ENCODE measurements at regions of chr1 and their contacts with region 1.

Region 1: GRCh38 chr1:84913555-84913892 is 20.5 kb upstream of the LPAR3 start:
- DNase-seq: no peak
- ATAC-seq: peak in 3 of 4 donors; percentile 36 to 80 (median 75)
- H3K4me3 ChIP-seq: no peak overlapping the region
- H3K27ac ChIP-seq: no peak overlapping the region
- H3K4me1 ChIP-seq: peaks cover 0 to 9% (median 3%) of the 10 kb centered on the region in 12 donors
- H3K27me3 ChIP-seq: no peaks in the 10 kb centered on the region
- CTCF ChIP-seq: no peak
- POLR2A ChIP-seq: no peak

Region 2: DNA sequence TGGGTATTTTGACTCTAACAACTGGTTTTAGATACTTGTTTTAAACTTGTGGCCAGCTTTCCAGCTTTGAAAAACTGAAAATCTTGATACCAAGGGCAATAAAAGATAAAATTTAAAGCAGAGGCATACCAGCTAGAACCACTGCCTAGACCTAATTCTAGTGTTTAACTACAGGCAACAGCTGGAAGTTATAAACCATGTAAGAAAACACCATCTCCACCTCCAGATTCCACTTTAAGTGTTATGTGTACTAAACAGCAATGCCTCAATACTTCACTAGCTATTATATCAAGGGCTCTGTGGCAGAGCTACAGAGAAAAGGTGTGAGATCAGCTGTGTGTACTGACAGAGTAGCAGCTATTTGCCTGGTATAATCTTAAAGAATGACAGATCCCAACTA is 90.0 kb before region 1 on chr1:
- intact Hi-C with region 1: no loop called
- DNase-seq: no peak
- ATAC-seq: peak in 2 of 4 donors; percentile 33 to 39
- H3K4me3 ChIP-seq: no peak overlapping the region
- H3K27ac ChIP-seq: no peak overlapping the region
- H3K4me1 ChIP-seq: peaks cover 0 to 7% (median 0%) of the 10 kb centered on the region in 12 donors
- H3K27me3 ChIP-seq: no peaks in the 10 kb centered on the region
- CTCF ChIP-seq: no peak
- POLR2A ChIP-seq: no peak

Region 3: DNA sequence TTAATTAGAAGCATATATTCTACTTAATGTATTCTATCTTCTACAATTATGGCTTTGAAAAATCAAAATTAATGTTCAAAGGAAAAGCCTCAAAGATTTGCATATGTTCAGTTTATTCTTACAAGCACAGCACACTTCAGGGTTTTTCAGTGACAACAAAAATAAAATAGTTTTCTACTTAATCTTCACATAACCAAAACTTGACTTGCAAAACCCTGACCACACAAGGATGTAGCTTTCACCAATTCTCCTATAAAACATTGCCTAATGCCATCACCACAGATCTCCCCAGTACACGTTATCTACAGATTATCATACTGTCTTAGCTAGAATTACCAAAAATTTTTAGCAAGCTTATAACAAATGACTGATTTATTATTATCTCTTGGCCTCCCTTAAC is 43.8 kb before region 1 on chr1:
- intact Hi-C with region 1: loop called in 1 of 10 experiments (anchors 2 kb)
- DNase-seq: no peak
- ATAC-seq: no peak
- H3K4me3 ChIP-seq: no peak overlapping the region
- H3K27ac ChIP-seq: no peak overlapping the region
- H3K4me1 ChIP-seq: peaks cover 0 to 13% (median 0%) of the 10 kb centered on the region in 12 donors
- H3K27me3 ChIP-seq: peaks cover 0 to 3% (median 0%) of the 10 kb centered on the region in 9 donors
- CTCF ChIP-seq: no peak
- POLR2A ChIP-seq: no peak

Measured in heart left ventricle (tissue), 16 donors.